GM12878 (cell line): ENCODE measurements at regions of chr11 and their contacts with region 1.

Region 1: GRCh38 chr11:94602430-94603372 is 35.5 kb downstream of the PIWIL4 start:
- DNase-seq: peak; percentile 75
- ATAC-seq: peak; percentile 94
- H3K4me3 ChIP-seq: no peak overlapping the region
- H3K27ac ChIP-seq: peak overlapping the region; percentile 44; the same call in 1 of the 2 replicates
- H3K4me1 ChIP-seq: peaks cover 7% of the 10 kb centered on the region; the same call in 1 of the 2 replicates
- H3K27me3 ChIP-seq: no peaks in the 10 kb centered on the region
- CTCF ChIP-seq: peak; percentile 58 to 66 (median 66)
- EP300 ChIP-seq: peak; percentile 80 to 95; a peak in 2 of 4 replicates
- POLR2A ChIP-seq: no peak
- RAD21 ChIP-seq: peak; percentile 65

Region 2: DNA sequence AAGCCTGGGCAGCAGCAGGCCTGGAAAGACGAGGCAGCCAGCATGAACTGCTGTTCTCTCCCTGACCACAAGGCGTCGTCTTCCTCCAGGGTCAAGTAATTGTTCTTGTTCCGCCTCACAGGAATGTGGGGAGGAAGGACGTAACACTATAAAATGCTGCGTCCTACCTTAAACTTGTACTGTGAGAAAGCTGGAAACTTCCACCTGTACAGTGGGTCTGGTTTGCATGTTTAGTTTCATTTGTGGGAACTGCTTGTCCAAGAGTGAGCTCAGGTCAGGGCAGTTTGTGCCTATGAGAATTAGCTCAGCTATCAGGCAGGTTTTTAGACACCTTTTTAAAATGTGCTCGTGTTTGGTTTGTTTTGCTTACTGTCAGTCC is 418.8 kb before region 1 on chr11:
- CTCF ChIA-PET with region 1: interaction called, 12 read pairs
- POLR2A ChIA-PET with region 1: no interaction called
- RAD21 ChIA-PET with region 1: interaction called, 3 read pairs
- SMC1A ChIA-PET with region 1: interaction called, 3 read pairs
- in situ Hi-C with region 1: no loop called
- intact Hi-C with region 1: no loop called
- DNase-seq: peak; percentile 17
- ATAC-seq: peak; percentile 91
- H3K4me3 ChIP-seq: no peak overlapping the region
- H3K27ac ChIP-seq: no peak overlapping the region
- H3K4me1 ChIP-seq: peaks cover 9% of the 10 kb centered on the region
- H3K27me3 ChIP-seq: no peaks in the 10 kb centered on the region
- CTCF ChIP-seq: peak; percentile 77 to 90 (median 86)
- EP300 ChIP-seq: no peak
- POLR2A ChIP-seq: no peak
- RAD21 ChIP-seq: peak; percentile 87

Region 3: DNA sequence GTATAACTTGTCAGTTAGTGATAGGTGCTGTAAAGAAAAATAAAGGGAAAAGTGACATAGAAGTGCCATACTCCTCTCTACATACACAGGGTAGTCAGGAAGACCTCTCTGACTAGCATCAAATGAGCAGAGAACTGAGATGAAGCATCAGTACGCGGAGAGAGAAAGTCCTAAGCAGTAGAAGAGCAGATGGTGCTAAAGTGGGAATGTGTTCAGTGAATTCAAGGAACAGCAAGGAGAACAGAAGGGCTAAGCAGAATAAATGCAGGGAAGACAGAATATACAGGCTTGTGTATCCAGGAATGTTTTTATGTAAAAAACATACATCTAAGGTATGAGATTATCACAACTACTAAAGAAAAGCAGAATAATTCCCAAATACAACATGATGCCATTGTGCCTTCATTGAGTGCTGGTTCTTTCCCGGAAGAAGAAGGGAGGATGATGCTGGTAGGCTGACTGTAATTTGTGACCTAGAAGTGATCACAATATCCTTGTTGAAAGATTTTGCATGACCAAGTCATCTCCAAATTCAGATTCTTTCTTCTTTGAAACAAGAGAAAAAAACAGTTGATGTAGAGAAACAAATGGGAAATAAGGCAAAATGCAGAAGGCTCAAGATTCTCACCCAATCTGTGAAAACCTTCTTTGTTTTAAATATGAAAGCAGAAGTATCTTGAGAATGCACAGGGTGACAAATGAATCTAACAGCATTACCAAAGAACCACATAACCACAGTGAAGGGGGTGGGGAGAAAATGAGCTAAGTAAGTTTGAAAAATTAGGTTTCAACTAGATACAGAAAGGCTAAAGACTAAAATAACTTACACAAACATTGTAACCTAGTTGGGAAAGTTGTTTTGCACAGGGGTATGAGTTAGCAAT is 129.5 kb before region 1 on chr11:
- CTCF ChIA-PET with region 1: interaction called, 11 read pairs
- POLR2A ChIA-PET with region 1: interaction called, 3 read pairs
- RAD21 ChIA-PET with region 1: interaction called, 12 read pairs
- SMC1A ChIA-PET with region 1: interaction called, 6 read pairs
- in situ Hi-C with region 1: no loop called
- intact Hi-C with region 1: loop called (anchors 1 kb)
- DNase-seq: peak; percentile 88
- ATAC-seq: peak; percentile 82
- H3K4me3 ChIP-seq: peak overlapping the region; percentile 11; the same call in 1 of the 2 replicates
- H3K27ac ChIP-seq: peak overlapping the region; percentile 69
- H3K4me1 ChIP-seq: peaks cover 48% of the 10 kb centered on the region
- H3K27me3 ChIP-seq: no peaks in the 10 kb centered on the region
- CTCF ChIP-seq: no peak
- EP300 ChIP-seq: peak; percentile 96 to 97
- POLR2A ChIP-seq: no peak
- RAD21 ChIP-seq: no peak

Region 4: GRCh38 chr11:94519478-94520084 is 83.1 kb before region 1 on chr11:
- CTCF ChIA-PET with region 1: interaction called, 337 read pairs
- POLR2A ChIA-PET with region 1: interaction called, 13 read pairs
- RAD21 ChIA-PET with region 1: interaction called, 121 read pairs
- SMC1A ChIA-PET with region 1: interaction called, 216 read pairs
- in situ Hi-C with region 1: loop called (anchors 5 kb)
- intact Hi-C with region 1: loop called (anchors 1 kb)
- DNase-seq: no peak
- ATAC-seq: peak; percentile 78
- H3K4me3 ChIP-seq: no peak overlapping the region
- H3K27ac ChIP-seq: no peak overlapping the region
- H3K4me1 ChIP-seq: no peaks in the 10 kb centered on the region; the same call in 1 of the 2 replicates
- H3K27me3 ChIP-seq: no peaks in the 10 kb centered on the region
- CTCF ChIP-seq: peak; percentile 37 to 47 (median 40); a peak in 5 of 6 replicates
- EP300 ChIP-seq: no peak
- POLR2A ChIP-seq: no peak
- RAD21 ChIP-seq: peak; percentile 73

Region 5: DNA sequence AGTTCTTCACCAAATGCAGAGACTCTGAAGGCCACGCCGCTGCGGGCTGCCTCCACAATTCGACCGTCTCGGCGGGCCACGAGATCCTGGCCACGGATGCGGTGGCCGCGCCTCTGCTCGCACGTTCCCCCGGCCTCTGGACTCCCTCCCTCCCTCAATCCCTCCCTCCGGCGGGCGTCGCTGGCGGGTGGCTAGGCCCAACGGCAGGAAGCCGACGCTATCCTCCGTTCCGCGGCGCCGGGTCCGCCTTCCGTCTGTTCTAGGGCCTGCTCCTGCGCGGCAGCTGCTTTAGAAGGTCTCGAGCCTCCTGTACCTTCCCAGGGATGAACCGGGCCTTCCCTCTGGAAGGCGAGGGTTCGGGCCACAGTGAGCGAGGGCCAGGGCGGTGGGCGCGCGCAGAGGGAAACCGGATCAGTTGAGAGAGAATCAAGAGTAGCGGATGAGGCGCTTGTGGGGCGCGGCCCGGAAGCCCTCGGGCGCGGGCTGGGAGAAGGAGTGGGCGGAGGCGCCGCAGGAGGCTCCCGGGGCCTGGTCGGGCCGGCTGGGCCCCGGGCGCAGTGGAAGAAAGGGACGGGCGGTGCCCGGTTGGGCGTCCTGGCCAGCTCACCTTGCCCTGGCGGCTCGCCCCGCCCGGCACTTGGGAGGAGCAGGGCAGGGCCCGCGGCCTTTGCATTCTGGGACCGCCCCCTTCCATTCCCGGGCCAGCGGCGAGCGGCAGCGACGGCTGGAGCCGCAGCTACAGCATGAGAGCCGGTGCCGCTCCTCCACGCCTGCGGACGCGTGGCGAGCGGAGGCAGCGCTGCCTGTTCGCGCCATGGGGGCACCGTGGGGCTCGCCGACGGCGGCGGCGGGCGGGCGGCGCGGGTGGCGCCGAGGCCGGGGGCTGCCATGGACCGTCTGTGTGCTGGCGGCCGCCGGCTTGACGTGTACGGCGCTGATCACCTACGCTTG is 58.7 kb before region 1 on chr11 and contains the start of gene FUT4:
- CTCF ChIA-PET with region 1: interaction called, 36 read pairs
- POLR2A ChIA-PET with region 1: interaction called, 5 read pairs
- RAD21 ChIA-PET with region 1: interaction called, 52 read pairs
- SMC1A ChIA-PET with region 1: interaction called, 53 read pairs
- in situ Hi-C with region 1: no loop called
- intact Hi-C with region 1: loop called (anchors 1 kb)
- DNase-seq: no peak
- ATAC-seq: peak; percentile 88
- H3K4me3 ChIP-seq: peak within 1 kb of the TSS; percentile 80
- H3K27ac ChIP-seq: peak within 1 kb of the TSS; percentile 79
- H3K4me1 ChIP-seq: no peaks in the 10 kb centered on the region
- H3K27me3 ChIP-seq: no peaks in the 10 kb centered on the region
- CTCF ChIP-seq: peak in 1 of 3 experiments; percentile 2; a peak in 2 of 6 replicates
- EP300 ChIP-seq: no peak
- POLR2A ChIP-seq: peak; percentile 80
- RAD21 ChIP-seq: no peak
- polyA plus RNA-seq, gene FUT4: 0.68 TPM

Region 6: GRCh38 chr11:94583866-94584500 is 18.7 kb before region 1 on chr11:
- CTCF ChIA-PET with region 1: interaction called, 78 read pairs
- POLR2A ChIA-PET with region 1: interaction called, 24 read pairs
- RAD21 ChIA-PET with region 1: interaction called, 86 read pairs
- SMC1A ChIA-PET with region 1: interaction called, 126 read pairs
- in situ Hi-C with region 1: no loop called
- intact Hi-C with region 1: loop called (anchors 1 kb)
- DNase-seq: peak; percentile 62
- ATAC-seq: peak; percentile 73
- H3K4me3 ChIP-seq: peak overlapping the region; percentile 8
- H3K27ac ChIP-seq: peak overlapping the region; percentile 84
- H3K4me1 ChIP-seq: peaks cover 22% of the 10 kb centered on the region
- H3K27me3 ChIP-seq: no peaks in the 10 kb centered on the region
- CTCF ChIP-seq: no peak
- EP300 ChIP-seq: peak; percentile 81 to 82; a peak in 3 of 4 replicates
- POLR2A ChIP-seq: no peak
- RAD21 ChIP-seq: no peak

Region 7: GRCh38 chr11:94664346-94664745 is 61.6 kb after region 1 on chr11:
- CTCF ChIA-PET with region 1: no interaction called
- POLR2A ChIA-PET with region 1: no interaction called
- RAD21 ChIA-PET with region 1: no interaction called
- SMC1A ChIA-PET with region 1: no interaction called
- in situ Hi-C with region 1: no loop called
- intact Hi-C with region 1: no loop called
- DNase-seq: no peak
- ATAC-seq: no peak
- H3K4me3 ChIP-seq: no peak overlapping the region
- H3K27ac ChIP-seq: no peak overlapping the region
- H3K4me1 ChIP-seq: no peaks in the 10 kb centered on the region
- H3K27me3 ChIP-seq: peaks cover 2 to 9% of the 10 kb centered on the region in 2 experiments; a peak in 2 of 4 replicates
- CTCF ChIP-seq: no peak
- EP300 ChIP-seq: no peak
- POLR2A ChIP-seq: no peak
- RAD21 ChIP-seq: no peak